ENCODE measurements at regions of chr5 and their contacts with region 1.

Region 1: DNA sequence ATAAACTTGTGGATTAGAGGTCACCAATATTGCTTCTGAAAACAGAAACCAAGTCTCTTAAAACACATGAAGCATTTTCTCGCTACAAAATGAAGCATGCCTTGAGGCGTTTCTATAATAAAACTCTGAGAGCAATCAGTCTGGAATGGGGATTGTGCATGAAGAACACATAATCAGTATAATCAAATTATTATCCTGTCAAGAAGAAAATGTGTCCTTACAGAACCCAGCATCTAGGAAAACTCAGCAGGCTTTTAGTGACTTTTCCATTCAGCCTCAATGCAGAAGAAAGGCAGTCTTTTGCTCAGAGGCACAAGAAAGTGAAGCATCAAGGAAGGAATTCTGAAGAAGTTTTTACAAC is 121.9 kb downstream of the CDH18 start:
- DNase-seq: no peak
- H3K4me3 Mint-ChIP-seq: no peak overlapping the region
- H3K27ac Mint-ChIP-seq: no peak overlapping the region
- H3K4me1 Mint-ChIP-seq: no peaks in the 10 kb centered on the region
- H3K27me3 Mint-ChIP-seq: no peaks in the 10 kb centered on the region
- CTCF ChIP-seq: no peak

Region 2: GRCh38 chr5:19497229-19497815 is 368.7 kb before region 1 on chr5:
- CTCF ChIA-PET with region 1: interaction called, 11 read pairs
- intact Hi-C with region 1: no loop called
- DNase-seq: no peak
- H3K4me3 Mint-ChIP-seq: no peak overlapping the region
- H3K27ac Mint-ChIP-seq: no peak overlapping the region
- H3K4me1 Mint-ChIP-seq: peaks cover 9% of the 10 kb centered on the region
- H3K27me3 Mint-ChIP-seq: no peaks in the 10 kb centered on the region
- CTCF ChIP-seq: no peak

Region 3: DNA sequence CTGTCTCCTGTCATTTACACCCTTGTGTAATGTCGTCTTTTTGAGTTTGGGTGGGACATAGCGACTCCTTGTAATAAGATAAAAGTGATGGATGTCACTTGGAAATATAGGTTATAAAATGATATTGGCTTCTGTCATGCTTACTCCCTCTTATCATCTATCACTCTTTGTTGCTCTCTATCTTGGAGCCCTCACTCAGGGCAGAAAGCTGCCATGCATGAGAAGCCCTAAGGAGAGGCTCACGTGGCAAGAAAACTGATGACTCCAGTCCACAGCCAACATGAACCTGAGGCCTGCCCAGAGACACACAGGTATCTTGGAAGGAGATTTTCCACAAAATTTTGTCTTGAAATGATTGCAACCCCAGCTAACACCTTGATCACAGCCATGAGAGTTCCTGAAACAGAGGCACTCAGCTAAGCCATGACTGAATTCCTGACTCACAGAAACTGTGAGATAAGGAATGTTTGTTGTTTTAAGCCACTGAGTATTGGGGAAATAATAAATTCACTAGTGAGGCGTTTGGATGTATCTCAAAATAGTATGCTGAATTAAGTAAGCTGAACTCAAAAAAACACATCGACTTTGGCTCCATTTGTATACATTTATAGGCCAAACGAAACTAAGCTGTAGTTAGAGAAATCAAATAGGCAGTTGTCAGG is 94.8 kb before region 1 on chr5:
- CTCF ChIA-PET with region 1: no interaction called
- intact Hi-C with region 1: no loop called
- DNase-seq: no peak
- H3K4me3 Mint-ChIP-seq: no peak overlapping the region
- H3K27ac Mint-ChIP-seq: no peak overlapping the region
- H3K4me1 Mint-ChIP-seq: no peaks in the 10 kb centered on the region
- H3K27me3 Mint-ChIP-seq: no peaks in the 10 kb centered on the region
- CTCF ChIP-seq: no peak

Region 4: GRCh38 chr5:19950897-19951296 is 84.8 kb after region 1 on chr5:
- CTCF ChIA-PET with region 1: no interaction called
- intact Hi-C with region 1: no loop called
- DNase-seq: no peak
- H3K4me3 Mint-ChIP-seq: no peak overlapping the region
- H3K27ac Mint-ChIP-seq: no peak overlapping the region
- H3K4me1 Mint-ChIP-seq: no peaks in the 10 kb centered on the region
- H3K27me3 Mint-ChIP-seq: no peaks in the 10 kb centered on the region
- CTCF ChIP-seq: no peak

Measured in Calu3 (cell line).